ENCODE measurements at regions of chr3 and their contacts with region 1.

Region 1: DNA sequence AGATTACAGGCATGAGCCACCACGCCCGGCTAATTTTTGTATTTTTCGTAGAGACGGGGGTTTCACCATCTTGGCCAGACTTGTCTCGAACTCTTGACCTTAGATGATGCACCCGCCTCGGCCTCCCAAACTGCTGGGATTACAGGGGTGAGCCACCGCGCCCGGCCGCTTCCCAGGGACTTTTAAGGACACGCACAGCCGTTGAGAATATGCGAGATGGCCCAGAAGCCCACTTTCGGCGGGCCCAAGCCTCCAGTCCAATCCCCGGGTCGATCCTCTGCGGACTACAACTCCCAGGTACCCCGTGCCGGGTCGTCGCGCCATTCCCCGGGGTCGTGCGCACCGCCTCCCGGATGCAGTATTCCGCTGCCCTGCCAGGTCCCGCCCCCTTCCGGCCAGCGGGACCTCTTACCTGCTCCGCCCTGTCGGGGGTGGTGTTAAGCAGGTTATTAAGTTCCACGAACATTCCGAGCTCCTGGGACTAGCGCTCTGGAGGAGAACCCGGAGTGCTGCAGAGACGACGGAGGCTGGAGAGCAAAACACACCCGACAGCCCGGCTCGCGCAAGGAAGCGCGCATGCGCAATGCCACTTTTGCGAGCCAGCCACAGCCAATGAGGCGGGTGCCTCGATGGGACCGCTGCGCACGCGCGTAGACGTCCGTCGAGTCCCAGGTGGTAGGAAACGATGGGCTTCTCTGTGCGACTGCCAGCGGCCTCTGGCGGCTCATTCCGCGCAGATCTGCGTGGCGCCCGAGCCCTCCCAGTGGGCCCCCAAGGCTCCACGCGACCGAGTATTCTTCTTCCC is at the start of gene ELP6:
- DNase-seq: peak; percentile 99
- ATAC-seq: peak; percentile 93
- H3K4me3 ChIP-seq: peak within 1 kb of the TSS; percentile 79 to 91 (median 80)
- H3K4me3 Mint-ChIP-seq: peak within 1 kb of the TSS; percentile 99
- H3K27ac ChIP-seq: peak within 1 kb of the TSS; percentile 66 to 76
- H3K27ac Mint-ChIP-seq: peak within 1 kb of the TSS; percentile 99
- H3K4me1 ChIP-seq: peaks cover 0 to 9% of the 10 kb centered on the region in 2 donors
- H3K4me1 Mint-ChIP-seq: peaks cover 16% of the 10 kb centered on the region
- H3K27me3 ChIP-seq: no peaks in the 10 kb centered on the region
- H3K27me3 Mint-ChIP-seq: no peaks in the 10 kb centered on the region
- CTCF ChIP-seq: peak; percentile 67
- total RNA-seq, gene ELP6: 32.0 and 36.7 TPM in 2 replicates

Region 2: DNA sequence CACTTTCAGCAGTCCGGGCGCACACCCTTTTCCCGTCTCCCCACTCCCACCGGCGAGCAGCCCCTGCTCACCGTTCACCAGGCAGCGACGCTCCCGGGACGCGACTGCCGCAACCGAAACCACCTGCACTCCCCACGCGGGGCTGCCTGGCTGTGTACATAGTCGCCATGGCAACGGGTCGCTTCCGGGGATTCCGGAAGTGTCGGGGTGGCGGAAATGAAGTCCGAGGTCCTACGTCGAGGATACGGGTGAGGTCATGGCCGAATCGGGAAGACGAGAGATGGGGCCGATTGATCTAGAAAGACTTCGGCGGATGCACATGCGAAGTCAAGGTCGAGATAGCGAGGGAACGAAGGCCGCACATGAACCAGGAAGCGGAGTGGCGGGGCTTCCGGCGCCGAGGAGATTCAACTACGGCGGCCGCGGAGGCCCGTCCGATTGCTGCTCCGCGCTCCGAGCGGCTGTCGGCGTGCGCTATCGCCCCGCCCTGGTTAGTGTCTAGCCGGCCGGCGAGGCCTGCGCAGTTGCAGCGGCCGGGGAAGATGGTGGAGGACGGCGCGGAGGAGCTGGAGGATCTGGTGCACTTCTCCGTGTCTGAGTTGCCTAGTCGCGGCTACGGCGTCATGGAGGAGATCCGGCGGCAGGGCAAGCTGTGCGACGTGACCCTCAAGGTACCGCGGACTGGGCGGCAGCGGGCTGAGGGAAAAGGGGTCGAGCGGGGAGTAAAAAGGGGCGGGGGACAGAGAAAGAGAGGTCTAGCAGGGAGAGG is 230.7 kb before region 1 on chr3 and contains the starts of genes KIF9 and KLHL18:
- CTCF ChIA-PET with region 1: no interaction called
- POLR2A ChIA-PET with region 1: no interaction called
- intact Hi-C with region 1: loop called (anchors 2 kb)
- DNase-seq: peak; percentile 100
- ATAC-seq: peak; percentile 85
- H3K4me3 ChIP-seq: peak within 1 kb of the TSS; percentile 74 to 98 (median 89)
- H3K4me3 Mint-ChIP-seq: peak within 1 kb of the TSS; percentile 99
- H3K27ac ChIP-seq: peak within 1 kb of the TSS; percentile 99
- H3K27ac Mint-ChIP-seq: peak within 1 kb of the TSS; percentile 100
- H3K4me1 ChIP-seq: peaks cover 33 to 49% of the 10 kb centered on the region in 2 donors
- H3K4me1 Mint-ChIP-seq: peaks cover 45% of the 10 kb centered on the region
- H3K27me3 ChIP-seq: no peaks in the 10 kb centered on the region
- H3K27me3 Mint-ChIP-seq: no peaks in the 10 kb centered on the region
- CTCF ChIP-seq: no peak
- total RNA-seq, gene KIF9: 1.3 and 3.0 TPM in 2 replicates
- total RNA-seq, gene KLHL18: 30.9 and 33.0 TPM in 2 replicates

Region 3: GRCh38 chr3:47420511-47421484 is 92.5 kb before region 1 on chr3:
- CTCF ChIA-PET with region 1: interaction called, 11 read pairs
- POLR2A ChIA-PET with region 1: no interaction called
- intact Hi-C with region 1: no loop called
- DNase-seq: peak; percentile 92
- ATAC-seq: peak; percentile 98
- H3K4me3 ChIP-seq: peak overlapping the region in 2 of 5 experiments; percentile 8 to 9
- H3K4me3 Mint-ChIP-seq: peak overlapping the region; percentile 76
- H3K27ac ChIP-seq: peak overlapping the region; percentile 77 to 87
- H3K27ac Mint-ChIP-seq: peak overlapping the region; percentile 99
- H3K4me1 ChIP-seq: peaks cover 11 to 12% of the 10 kb centered on the region in 2 donors
- H3K4me1 Mint-ChIP-seq: peaks cover 14% of the 10 kb centered on the region
- H3K27me3 ChIP-seq: no peaks in the 10 kb centered on the region
- H3K27me3 Mint-ChIP-seq: no peaks in the 10 kb centered on the region
- CTCF ChIP-seq: peak; percentile 89

Region 4: DNA sequence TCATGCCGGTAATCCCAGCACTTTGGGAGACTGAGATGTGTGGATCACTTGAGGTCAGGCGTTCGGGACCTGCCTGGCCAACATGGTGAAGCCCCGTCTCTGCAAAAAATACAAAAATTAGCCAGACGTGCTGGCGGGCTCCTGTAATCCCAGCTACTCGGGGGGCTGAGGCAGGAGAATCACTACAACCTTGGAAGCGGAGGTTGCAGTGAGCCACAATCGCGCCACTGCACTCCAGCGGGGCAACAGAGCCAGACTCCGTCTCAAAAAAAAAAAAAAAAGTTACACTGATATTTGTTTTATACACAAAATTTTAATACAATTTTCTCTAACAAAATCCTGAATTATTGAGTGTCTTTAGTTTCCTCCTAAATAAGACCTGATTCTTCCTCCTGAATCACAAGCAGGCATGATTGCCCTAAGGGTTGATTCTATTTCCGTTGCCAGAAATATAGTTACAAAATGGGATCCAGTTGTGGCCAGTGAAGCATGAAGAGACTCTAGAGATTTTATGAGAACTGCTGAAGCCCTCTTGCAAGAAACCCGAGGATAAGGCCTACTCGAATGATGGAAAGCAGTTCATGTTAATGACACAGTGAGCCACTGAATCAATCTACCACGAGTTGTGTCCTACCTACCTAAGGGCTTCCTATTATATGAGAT is 278.0 kb after region 1 on chr3:
- CTCF ChIA-PET with region 1: no interaction called
- POLR2A ChIA-PET with region 1: no interaction called
- intact Hi-C with region 1: loop called (anchors 1 kb)
- DNase-seq: no peak
- ATAC-seq: no peak
- H3K4me3 ChIP-seq: no peak overlapping the region
- H3K4me3 Mint-ChIP-seq: no peak overlapping the region
- H3K27ac ChIP-seq: no peak overlapping the region
- H3K27ac Mint-ChIP-seq: peak overlapping the region; percentile 4
- H3K4me1 ChIP-seq: no peaks in the 10 kb centered on the region
- H3K4me1 Mint-ChIP-seq: peaks cover 1% of the 10 kb centered on the region
- H3K27me3 ChIP-seq: no peaks in the 10 kb centered on the region
- H3K27me3 Mint-ChIP-seq: no peaks in the 10 kb centered on the region
- CTCF ChIP-seq: no peak

Measured in B cell (primary cell).